ENCODE measurements at regions of chr15 and their contacts with region 1.

Region 1: DNA sequence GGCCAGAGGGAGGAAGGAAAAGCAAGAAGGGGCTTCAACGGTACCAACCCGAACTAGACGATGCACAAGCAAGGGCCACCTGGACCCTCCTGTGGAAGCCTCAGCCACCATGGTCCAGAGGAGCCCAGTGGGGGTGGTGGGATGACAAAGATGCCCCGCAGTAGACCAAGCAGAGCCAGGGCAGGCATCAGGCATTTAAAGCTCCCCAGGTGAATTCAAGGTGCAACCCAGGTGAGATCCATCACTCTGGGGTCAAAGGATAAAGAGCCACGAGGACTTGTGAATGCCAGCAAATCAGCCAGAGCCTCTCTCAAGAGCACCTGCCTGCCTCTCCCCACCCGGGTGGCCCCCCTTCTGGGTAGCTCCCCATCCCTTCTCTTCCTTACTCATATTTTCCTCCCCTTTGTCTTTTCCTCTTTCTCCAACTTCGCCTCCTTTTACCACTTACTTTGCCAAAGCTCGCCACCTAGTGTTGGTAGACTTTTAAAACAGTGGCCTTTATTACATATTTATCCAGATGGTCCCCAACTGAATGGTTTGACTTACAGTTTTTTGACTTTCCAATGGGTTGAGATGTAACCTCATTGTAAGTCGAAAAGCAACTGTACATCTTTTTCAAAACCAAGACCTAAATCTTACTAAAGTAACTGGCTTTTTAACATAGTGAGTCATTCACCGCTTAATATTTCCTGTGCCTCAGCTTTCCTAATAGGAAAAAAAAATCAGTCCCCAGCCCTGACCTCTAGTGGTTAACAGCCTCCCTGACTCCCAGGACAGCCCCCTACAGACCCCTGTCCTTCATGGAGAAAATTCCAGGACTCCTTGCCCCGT is 18.8 kb downstream of the PLA2G4F start:
- DNase-seq: peak; percentile 38

Region 2: DNA sequence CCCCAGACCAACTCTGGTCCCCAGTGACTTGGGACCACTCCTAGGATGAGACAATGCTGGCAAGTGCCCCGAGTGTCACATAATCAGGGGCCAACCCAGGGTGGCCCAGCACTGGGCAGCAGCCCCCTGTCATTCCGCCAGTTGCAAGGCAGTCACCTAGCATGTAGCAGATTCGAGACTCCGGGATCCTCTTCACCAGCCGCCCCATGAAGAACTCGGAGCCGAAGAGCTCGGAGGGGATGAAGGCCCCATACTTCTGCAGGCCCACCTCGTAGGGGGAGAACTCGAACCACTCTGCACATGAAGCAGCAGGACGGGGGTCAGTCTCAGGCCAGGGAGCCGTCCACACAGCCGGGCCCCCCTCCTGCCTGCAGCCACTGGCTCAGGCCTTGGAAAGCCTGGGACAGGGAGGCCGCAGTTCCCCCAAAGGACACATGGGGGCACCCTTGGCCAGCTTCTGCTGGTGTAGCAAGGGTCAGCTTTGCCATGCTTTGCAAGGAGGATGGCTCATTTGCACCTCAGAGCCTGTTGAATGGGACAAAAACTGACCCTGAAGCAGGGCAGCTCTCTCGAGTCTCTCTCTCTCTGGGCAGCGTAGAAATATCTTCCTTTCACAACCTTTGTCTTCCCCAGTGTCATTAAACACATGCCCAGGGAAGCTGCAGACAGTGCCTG is 148.2 kb before region 1 on chr15:
- intact Hi-C with region 1: loop called (anchors 10 kb)
- DNase-seq: peak; percentile 93

Region 3: DNA sequence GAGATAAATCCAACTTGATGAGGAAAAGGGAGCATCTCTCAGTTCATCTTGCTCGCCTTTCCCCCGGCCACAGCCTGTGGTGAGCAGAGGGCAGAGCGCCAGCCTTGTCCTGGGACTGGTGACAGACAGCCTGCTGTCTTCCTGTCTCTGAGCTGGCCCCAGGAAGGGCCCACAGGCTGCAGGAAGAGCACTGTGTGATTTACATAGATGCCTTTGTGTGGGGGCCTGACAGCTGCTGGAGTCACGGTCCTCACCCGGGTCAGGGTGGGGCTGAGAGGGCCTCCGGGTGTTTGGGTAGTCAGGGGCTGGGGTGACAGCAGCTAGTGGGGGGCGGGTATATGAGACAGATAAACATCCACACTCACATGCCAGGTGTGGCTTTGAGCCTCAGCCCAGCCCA is 72.6 kb before region 1 on chr15:
- intact Hi-C with region 1: loop called (anchors 5 kb)
- DNase-seq: peak; percentile 56

Region 4: DNA sequence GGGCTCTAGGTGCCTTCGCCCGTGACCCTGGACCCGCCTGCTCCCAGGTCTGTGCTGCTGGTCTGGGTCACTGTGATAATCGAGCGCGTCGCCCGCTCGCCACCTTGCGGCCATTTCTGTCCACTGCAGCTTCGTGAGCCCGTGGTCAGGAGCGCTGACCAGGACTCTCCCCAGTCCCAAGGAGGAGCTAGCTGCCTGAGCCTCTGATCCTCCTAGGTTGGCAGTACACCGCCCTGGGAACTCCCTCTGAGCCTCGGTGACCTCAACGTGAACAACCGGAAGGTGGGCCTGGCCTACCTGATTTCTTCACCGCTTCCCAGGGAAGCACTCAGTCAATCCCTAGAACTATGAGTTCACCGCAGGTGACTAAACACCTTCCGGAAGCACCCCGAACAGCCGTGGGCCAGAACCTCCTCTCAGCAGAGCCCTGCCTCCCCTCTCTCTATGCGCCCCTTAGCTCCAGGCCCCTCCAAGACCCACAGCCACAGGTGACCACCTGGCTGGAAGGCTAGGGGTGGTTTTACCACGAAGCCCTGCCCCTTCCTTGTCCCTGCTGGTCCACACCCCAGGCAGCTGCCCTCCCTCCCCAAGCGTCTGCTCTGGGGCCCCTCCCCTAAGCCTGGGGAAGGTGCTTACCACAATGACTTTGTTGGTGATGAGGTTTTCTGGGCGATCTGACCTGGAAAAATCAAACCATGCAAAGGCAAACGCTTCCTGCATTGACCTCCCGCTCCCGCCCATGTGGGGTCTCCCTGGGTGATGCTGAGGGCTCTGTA is 53.0 kb before region 1 on chr15:
- intact Hi-C with region 1: loop called (anchors 5 kb)
- DNase-seq: peak; percentile 89

Measured in cardiac septum (tissue), 1 donor.